Naive thymus-derived CD4-positive, alpha-beta T cell (primary cell): ENCODE measurements at regions of chr2 and their contacts with region 1.

Region 1: GRCh38 chr2:26785431-26786206 is at the start of gene CENPA:
- DNase-seq: peak; percentile 86 to 98 (median 96)
- ATAC-seq: peak; percentile 100
- H3K4me3 ChIP-seq: peak within 1 kb of the TSS; percentile 78
- H3K4me3 Mint-ChIP-seq: peak within 1 kb of the TSS; percentile 81 to 97 (median 88)
- H3K27ac ChIP-seq: peak within 1 kb of the TSS; percentile 60
- H3K27ac Mint-ChIP-seq: peak within 1 kb of the TSS; percentile 65 to 97 (median 89)
- H3K4me1 ChIP-seq: peaks cover 0 to 4% of the 10 kb centered on the region in 2 donors
- H3K4me1 Mint-ChIP-seq: peaks cover 10 to 34% (median 11%) of the 10 kb centered on the region in 7 donors
- H3K27me3 ChIP-seq: no peaks in the 10 kb centered on the region
- H3K27me3 Mint-ChIP-seq: peaks cover 0 to 26% (median 24%) of the 10 kb centered on the region in 5 donors
- total RNA-seq, gene CENPA: 0.37 to 25.6 (median 0.73) TPM in 3 of 5 experiments, not detected in the others

Region 2: DNA sequence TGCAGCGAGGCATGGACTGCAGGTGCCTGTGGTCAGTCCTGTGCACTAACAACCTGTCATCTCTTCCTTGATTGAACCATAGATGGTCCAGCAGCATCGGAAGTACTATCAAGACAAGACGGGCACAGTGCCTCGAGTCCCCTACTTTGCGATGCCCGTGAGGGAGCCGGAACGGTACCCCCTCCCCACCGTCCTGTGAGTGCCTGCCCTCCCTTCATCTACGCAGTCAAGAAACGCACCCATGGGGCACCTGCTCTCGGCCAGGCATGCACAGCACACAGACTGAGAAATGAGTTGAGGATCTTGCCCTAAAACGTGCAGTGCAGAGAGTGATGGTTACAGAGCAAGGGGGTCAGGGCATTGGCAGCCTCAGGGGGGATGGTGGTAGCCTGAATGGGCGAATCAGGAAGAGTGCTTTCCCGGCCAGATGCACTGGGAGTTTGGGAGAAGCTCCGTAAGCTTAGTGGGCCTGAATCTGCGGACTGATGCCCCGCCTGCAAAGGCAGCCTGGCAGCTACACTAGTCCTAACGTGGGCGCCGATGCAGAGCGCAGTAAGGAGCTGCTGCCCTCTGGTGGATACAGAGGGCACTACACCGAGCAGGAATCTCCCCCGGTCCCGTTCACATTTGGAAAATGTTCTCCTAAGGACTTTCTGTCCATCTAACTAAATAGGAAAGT is 208.0 kb before region 1 on chr2:
- CTCF ChIA-PET with region 1: no interaction called
- POLR2A ChIA-PET with region 1: no interaction called
- intact Hi-C with region 1: no loop called
- DNase-seq: peak; percentile 17 to 66 (median 52)
- ATAC-seq: peak; percentile 88
- H3K4me3 ChIP-seq: no peak overlapping the region
- H3K4me3 Mint-ChIP-seq: no peak overlapping the region
- H3K27ac ChIP-seq: no peak overlapping the region
- H3K27ac Mint-ChIP-seq: no peak overlapping the region
- H3K4me1 ChIP-seq: no peaks in the 10 kb centered on the region
- H3K4me1 Mint-ChIP-seq: peaks cover 0 to 5% (median 0%) of the 10 kb centered on the region in 7 donors
- H3K27me3 ChIP-seq: peaks cover 0 to 5% of the 10 kb centered on the region in 2 donors
- H3K27me3 Mint-ChIP-seq: peaks cover 5 to 13% (median 10%) of the 10 kb centered on the region in 5 donors

Region 3: GRCh38 chr2:26764078-26764887 is 21.3 kb before region 1 on chr2 and contains the start of gene SLC35F6:
- CTCF ChIA-PET with region 1: no interaction called
- POLR2A ChIA-PET with region 1: interaction called, 4 read pairs
- intact Hi-C with region 1: loop called (anchors 1 kb)
- DNase-seq: peak; percentile 70 to 90 (median 86)
- ATAC-seq: peak; percentile 95
- H3K4me3 ChIP-seq: peak within 1 kb of the TSS; percentile 92
- H3K4me3 Mint-ChIP-seq: peak within 1 kb of the TSS; percentile 85 to 97 (median 94)
- H3K27ac ChIP-seq: peak within 1 kb of the TSS; percentile 82
- H3K27ac Mint-ChIP-seq: peak within 1 kb of the TSS; percentile 62 to 97 (median 91)
- H3K4me1 ChIP-seq: peaks cover 23% of the 10 kb centered on the region in 2 donors
- H3K4me1 Mint-ChIP-seq: peaks cover 28 to 54% (median 39%) of the 10 kb centered on the region in 7 donors
- H3K27me3 ChIP-seq: no peaks in the 10 kb centered on the region
- H3K27me3 Mint-ChIP-seq: peaks cover 0 to 6% (median 0%) of the 10 kb centered on the region in 5 donors
- total RNA-seq, gene SLC35F6: 17.3 to 22.5 (median 19.9) TPM

Region 4: GRCh38 chr2:26838121-26838906 is 52.7 kb after region 1 on chr2:
- CTCF ChIA-PET with region 1: no interaction called
- POLR2A ChIA-PET with region 1: no interaction called
- intact Hi-C with region 1: loop called in 1 of 2 experiments (anchors 2 kb)
- DNase-seq: peak in 2 of 9 donors; percentile 12 to 18
- ATAC-seq: no peak
- H3K4me3 ChIP-seq: no peak overlapping the region
- H3K4me3 Mint-ChIP-seq: no peak overlapping the region
- H3K27ac ChIP-seq: no peak overlapping the region
- H3K27ac Mint-ChIP-seq: no peak overlapping the region
- H3K4me1 ChIP-seq: no peaks in the 10 kb centered on the region
- H3K4me1 Mint-ChIP-seq: no peaks in the 10 kb centered on the region
- H3K27me3 ChIP-seq: peaks cover 0 to 6% of the 10 kb centered on the region in 2 donors
- H3K27me3 Mint-ChIP-seq: peaks cover 30 to 64% (median 42%) of the 10 kb centered on the region in 5 donors

Region 5: GRCh38 chr2:27016801-27017325 is 231.2 kb after region 1 on chr2:
- CTCF ChIA-PET with region 1: no interaction called
- POLR2A ChIA-PET with region 1: no interaction called
- intact Hi-C with region 1: no loop called
- DNase-seq: peak in 7 of 9 donors; percentile 20 to 38 (median 27)
- ATAC-seq: peak; percentile 54
- H3K4me3 ChIP-seq: no peak overlapping the region
- H3K4me3 Mint-ChIP-seq: no peak overlapping the region
- H3K27ac ChIP-seq: no peak overlapping the region
- H3K27ac Mint-ChIP-seq: no peak overlapping the region
- H3K4me1 ChIP-seq: no peaks in the 10 kb centered on the region
- H3K4me1 Mint-ChIP-seq: peaks cover 0 to 7% (median 0%) of the 10 kb centered on the region in 7 donors
- H3K27me3 ChIP-seq: no peaks in the 10 kb centered on the region
- H3K27me3 Mint-ChIP-seq: no peaks in the 10 kb centered on the region

Region 6: DNA sequence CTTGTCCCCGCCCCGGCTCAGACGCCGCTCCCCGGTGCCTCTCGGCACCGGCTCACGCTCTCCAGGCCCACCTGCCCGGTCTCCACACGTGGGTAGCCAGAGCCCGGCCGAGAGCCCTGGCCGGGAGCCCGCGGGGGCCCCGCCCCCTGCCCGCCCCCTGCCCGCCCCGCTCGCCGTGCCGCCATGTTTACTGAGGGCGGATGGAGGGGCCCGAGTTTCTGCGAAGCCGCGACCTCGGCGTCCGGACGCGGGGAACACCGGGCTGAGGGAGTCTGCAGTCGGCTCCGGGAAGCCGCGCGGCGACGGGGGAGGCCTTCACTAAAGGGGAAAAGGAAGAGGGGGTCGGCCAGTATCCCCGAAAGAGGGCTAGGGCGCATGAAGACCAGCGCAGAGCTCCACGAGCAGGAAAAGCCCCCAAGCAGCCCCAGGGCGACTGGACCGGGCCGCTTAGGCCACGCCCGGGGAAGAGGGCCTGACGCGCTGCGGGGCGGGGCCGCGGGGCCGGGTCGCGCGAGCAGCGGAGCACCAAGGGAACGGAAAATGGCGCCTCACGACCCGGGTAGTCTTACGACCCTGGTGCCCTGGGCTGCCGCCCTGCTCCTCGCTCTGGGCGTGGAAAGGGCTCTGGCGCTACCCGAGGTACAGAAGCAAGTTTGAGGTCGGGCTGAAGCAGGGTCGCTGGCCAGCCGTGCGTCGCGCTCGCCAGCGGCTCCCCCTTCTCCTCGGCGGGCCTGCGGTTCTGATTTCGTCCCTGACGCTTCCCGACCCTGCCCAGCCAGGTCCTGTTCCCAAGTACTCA is 426.4 kb after region 1 on chr2 and contains the starts of genes ATRAID and SLC5A6:
- CTCF ChIA-PET with region 1: no interaction called
- POLR2A ChIA-PET with region 1: no interaction called
- intact Hi-C with region 1: loop called (anchors 1 to 5 kb)
- DNase-seq: peak; percentile 86 to 93 (median 92)
- ATAC-seq: peak; percentile 93
- H3K4me3 ChIP-seq: peak within 1 kb of the TSS; percentile 91
- H3K4me3 Mint-ChIP-seq: peak within 1 kb of the TSS; percentile 89 to 100 (median 99)
- H3K27ac ChIP-seq: peak within 1 kb of the TSS; percentile 100
- H3K27ac Mint-ChIP-seq: peak within 1 kb of the TSS; percentile 99 to 100 (median 100)
- H3K4me1 ChIP-seq: peaks cover 14 to 17% of the 10 kb centered on the region in 2 donors
- H3K4me1 Mint-ChIP-seq: peaks cover 18 to 49% (median 42%) of the 10 kb centered on the region in 7 donors
- H3K27me3 ChIP-seq: no peaks in the 10 kb centered on the region
- H3K27me3 Mint-ChIP-seq: no peaks in the 10 kb centered on the region
- total RNA-seq, gene ATRAID: 71.0 to 113 (median 90.7) TPM
- total RNA-seq, gene SLC5A6: 25.6 to 203 (median 44.3) TPM